Natural killer cell (primary cell): ENCODE measurements at regions of chr3 and their contacts with region 1.

Region 1: DNA sequence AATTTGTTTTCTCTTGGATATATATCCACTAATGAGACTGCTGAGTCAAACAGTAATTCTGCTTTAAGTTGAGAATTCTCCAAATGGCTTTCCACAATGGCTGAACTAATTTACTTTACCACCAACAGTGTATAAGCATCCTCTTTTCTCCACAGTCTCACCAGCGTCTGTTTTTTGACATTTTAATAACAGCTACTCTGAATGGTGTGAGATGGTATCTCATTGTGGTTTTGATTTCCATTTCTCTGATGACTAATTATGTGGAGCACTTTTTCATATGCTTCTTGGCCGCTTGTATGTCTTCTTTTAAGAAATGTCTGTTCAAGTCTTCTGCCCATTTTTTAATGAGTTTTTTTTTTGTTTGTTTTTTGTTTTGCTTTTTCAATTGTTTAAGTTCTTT is 206.2 kb downstream of the CTNNB1 start:
- DNase-seq: peak in 1 of 2 donors; percentile 10
- ATAC-seq: peak; percentile 69 to 90 (median 87)
- H3K4me3 ChIP-seq: no peak overlapping the region
- H3K4me3 Mint-ChIP-seq: peak overlapping the region; percentile 69
- H3K27ac ChIP-seq: no peak overlapping the region
- H3K27ac Mint-ChIP-seq: peak overlapping the region; percentile 67 to 82
- H3K4me1 ChIP-seq: peaks cover 4% of the 10 kb centered on the region
- H3K4me1 Mint-ChIP-seq: peaks cover 43 to 44% of the 10 kb centered on the region in 2 donors
- H3K27me3 ChIP-seq: no peaks in the 10 kb centered on the region
- H3K27me3 Mint-ChIP-seq: no peaks in the 10 kb centered on the region
- CTCF ChIP-seq: no peak

Region 2: DNA sequence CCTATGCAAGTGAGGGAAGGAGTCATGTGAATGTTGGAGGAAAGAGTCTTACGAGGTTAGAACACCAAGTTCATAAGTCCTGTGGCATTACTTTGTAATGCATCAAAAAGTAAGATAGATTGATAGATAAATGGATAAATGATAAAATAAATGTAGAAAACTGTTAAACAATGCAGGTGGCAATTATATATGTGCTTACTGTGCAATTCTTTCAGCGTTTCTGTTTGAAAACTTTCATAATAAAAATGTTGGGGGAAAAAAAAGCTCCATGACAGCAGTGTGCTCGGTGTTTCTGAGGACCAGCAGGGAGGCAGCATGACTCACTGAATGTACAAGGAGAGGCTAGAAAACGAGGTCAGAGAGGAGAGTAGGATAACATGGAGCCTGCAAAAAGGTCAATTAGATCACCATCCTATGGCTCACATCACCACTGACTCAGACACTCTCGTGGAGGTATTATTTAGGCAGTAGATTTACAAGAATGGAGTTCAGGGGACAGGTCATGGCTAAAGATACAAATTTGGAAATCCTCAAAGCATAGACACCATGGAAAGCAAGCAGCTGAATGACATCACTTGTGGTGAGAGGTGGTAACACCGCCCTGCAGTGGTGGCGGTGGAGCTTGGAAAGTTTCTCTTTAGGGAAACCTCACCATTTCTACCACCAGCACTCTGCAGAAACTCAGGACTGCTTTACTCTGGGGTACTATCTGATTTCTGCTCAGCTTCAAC is 13.7 kb after region 1 on chr3:
- intact Hi-C with region 1: loop called (anchors 1 kb)
- DNase-seq: peak; percentile 51 to 53
- ATAC-seq: peak; percentile 85 to 95 (median 87)
- H3K4me3 ChIP-seq: no peak overlapping the region
- H3K4me3 Mint-ChIP-seq: peak overlapping the region; percentile 76
- H3K27ac ChIP-seq: peak overlapping the region; percentile 39
- H3K27ac Mint-ChIP-seq: peak overlapping the region; percentile 76 to 81
- H3K4me1 ChIP-seq: peaks cover 20% of the 10 kb centered on the region
- H3K4me1 Mint-ChIP-seq: peaks cover 36 to 52% of the 10 kb centered on the region in 2 donors
- H3K27me3 ChIP-seq: no peaks in the 10 kb centered on the region
- H3K27me3 Mint-ChIP-seq: no peaks in the 10 kb centered on the region
- CTCF ChIP-seq: no peak